Dorsolateral prefrontal cortex (tissue), 120 donors: ENCODE measurements at regions of chr1 and their contacts with region 1.

Region 1: DNA sequence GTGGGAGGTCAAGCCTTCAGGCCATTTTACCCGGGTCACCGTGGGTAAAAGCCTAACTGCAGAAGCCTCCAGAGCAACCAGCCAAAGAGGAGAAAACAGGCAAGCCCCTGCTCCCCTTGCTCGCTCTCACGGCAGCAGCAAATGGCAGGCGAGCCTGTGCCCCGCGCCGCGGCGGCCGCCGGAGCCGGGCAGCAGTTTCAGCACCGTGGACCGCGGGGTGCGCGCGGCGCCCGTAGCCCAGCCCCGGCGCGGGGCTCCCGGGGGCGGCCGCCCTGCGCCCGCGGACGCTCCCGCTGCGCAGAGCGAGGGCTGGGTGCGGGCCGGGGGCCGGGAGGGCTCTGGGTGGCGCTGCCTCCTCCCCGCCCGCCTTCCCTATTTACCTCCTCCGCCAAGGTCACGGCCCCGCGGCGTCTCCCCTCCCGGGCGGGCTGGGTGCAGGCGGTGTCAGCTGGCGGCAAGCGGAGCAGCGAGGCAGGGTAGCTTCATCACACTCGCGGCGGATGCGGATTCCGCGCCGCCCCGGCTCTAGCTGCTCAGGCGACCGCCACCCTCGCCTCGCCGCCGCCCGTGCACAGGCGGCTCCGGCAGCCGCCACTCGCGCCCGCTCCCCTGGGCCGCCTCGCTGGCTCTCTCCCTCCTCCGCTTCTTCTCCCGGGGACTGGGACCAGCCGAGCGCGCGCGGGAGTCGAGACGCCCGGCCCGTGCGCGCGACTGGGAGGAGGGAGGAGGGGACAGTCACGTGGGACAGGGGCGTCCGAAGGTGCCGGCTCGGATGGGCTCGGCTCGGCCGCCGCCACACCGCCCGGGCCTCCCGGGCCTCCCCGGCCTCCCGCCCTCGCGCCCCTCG is at the start of gene RGS7:
- DNase-seq: peak in 9 of 10 donors; percentile 57 to 87 (median 70)
- H3K4me3 ChIP-seq: peak within 1 kb of the TSS; percentile 50 to 85 (median 72)
- H3K27ac ChIP-seq: peak within 1 kb of the TSS in 55 of 59 donors; percentile 35 to 93 (median 80)
- H3K27me3 ChIP-seq: no peaks in the 10 kb centered on the region
- CTCF ChIP-seq: no peak
- total RNA-seq, gene RGS7: 17.2 to 92.5 (median 53.3) TPM

Region 2: DNA sequence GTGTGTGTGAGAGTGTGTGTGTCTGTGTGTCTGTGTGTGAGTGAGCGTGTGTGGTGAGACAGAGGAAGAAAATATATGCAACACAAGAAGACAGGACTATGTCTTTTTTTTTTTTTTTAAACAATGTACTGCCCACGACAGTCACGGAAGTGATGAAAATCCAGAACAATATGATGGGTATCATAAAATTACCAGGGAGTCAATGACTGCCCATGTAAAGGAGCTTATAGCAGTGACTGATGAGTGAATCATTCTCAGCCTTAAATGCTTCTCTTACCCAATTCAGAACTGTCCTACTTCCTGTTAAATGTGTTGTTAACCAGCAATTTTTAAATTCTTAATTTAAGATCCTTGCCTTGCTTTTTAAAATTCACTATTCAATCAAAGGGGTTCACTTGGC is 46.3 kb before region 1 on chr1:
- intact Hi-C with region 1: loop called in 1 of 2 experiments (anchors 1 kb)
- DNase-seq: no peak
- H3K4me3 ChIP-seq: no peak overlapping the region
- H3K27ac ChIP-seq: peak overlapping the region in 5 of 59 donors; percentile 3 to 21 (median 20)
- H3K27me3 ChIP-seq: no peaks in the 10 kb centered on the region
- CTCF ChIP-seq: no peak

Region 3: GRCh38 chr1:241998412-241998921 is 641.7 kb after region 1 on chr1:
- intact Hi-C with region 1: no loop called
- DNase-seq: peak in 8 of 10 donors; percentile 12 to 60 (median 40)
- H3K4me3 ChIP-seq: peak overlapping the region in 47 of 59 donors; percentile 1 to 58 (median 33)
- H3K27ac ChIP-seq: no peak overlapping the region
- H3K27me3 ChIP-seq: no peaks in the 10 kb centered on the region
- CTCF ChIP-seq: peak; percentile 17 to 84 (median 66)